MCF 10A (cell line): ENCODE measurements at regions of chr1 and their contacts with region 1.

Region 1: GRCh38 chr1:5915587-5916571 is 76.3 kb downstream of the NPHP4 start:
- DNase-seq: peak; percentile 42
- H3K4me3 Mint-ChIP-seq: no peak overlapping the region
- H3K27ac Mint-ChIP-seq: no peak overlapping the region
- H3K4me1 Mint-ChIP-seq: peaks cover 7% of the 10 kb centered on the region
- H3K27me3 Mint-ChIP-seq: no peaks in the 10 kb centered on the region
- CTCF ChIP-seq: peak; percentile 62

Region 2: GRCh38 chr1:5637171-5637570 is 278.7 kb before region 1 on chr1:
- CTCF ChIA-PET with region 1: interaction called, 3 read pairs
- POLR2A ChIA-PET with region 1: no interaction called
- intact Hi-C with region 1: loop called (anchors 5 kb)
- DNase-seq: peak; percentile 51
- H3K4me3 Mint-ChIP-seq: no peak overlapping the region
- H3K27ac Mint-ChIP-seq: no peak overlapping the region
- H3K4me1 Mint-ChIP-seq: no peaks in the 10 kb centered on the region
- H3K27me3 Mint-ChIP-seq: peaks cover 16% of the 10 kb centered on the region
- CTCF ChIP-seq: peak; percentile 72

Region 3: GRCh38 chr1:5905436-5905835 is 10.4 kb before region 1 on chr1:
- CTCF ChIA-PET with region 1: interaction called, 11 read pairs
- POLR2A ChIA-PET with region 1: interaction called, 3 read pairs
- intact Hi-C with region 1: no loop called
- DNase-seq: no peak
- H3K4me3 Mint-ChIP-seq: no peak overlapping the region
- H3K27ac Mint-ChIP-seq: no peak overlapping the region
- H3K4me1 Mint-ChIP-seq: peaks cover 6% of the 10 kb centered on the region
- H3K27me3 Mint-ChIP-seq: no peaks in the 10 kb centered on the region
- CTCF ChIP-seq: no peak

Region 4: GRCh38 chr1:6188466-6188865 is 272.6 kb after region 1 on chr1:
- CTCF ChIA-PET with region 1: no interaction called
- POLR2A ChIA-PET with region 1: no interaction called
- intact Hi-C with region 1: no loop called
- DNase-seq: peak; percentile 79
- H3K4me3 Mint-ChIP-seq: no peak overlapping the region
- H3K27ac Mint-ChIP-seq: no peak overlapping the region
- H3K4me1 Mint-ChIP-seq: peaks cover 11% of the 10 kb centered on the region
- H3K27me3 Mint-ChIP-seq: no peaks in the 10 kb centered on the region
- CTCF ChIP-seq: no peak